AG04449 (cell line): ENCODE measurements at regions of chr16 and their contacts with region 1.

Region 1: GRCh38 chr16:10981697-10982216 is 37.4 kb downstream of the CLEC16A start:
- DNase-seq: no peak
- H3K4me3 ChIP-seq: no peak overlapping the region
- CTCF ChIP-seq: peak; percentile 19

Region 2: GRCh38 chr16:10846213-10846998 is 135.4 kb before region 1 on chr16:
- CTCF ChIA-PET with region 1: no interaction called
- POLR2A ChIA-PET with region 1: no interaction called
- DNase-seq: no peak
- H3K4me3 ChIP-seq: no peak overlapping the region
- CTCF ChIP-seq: no peak

Region 3: DNA sequence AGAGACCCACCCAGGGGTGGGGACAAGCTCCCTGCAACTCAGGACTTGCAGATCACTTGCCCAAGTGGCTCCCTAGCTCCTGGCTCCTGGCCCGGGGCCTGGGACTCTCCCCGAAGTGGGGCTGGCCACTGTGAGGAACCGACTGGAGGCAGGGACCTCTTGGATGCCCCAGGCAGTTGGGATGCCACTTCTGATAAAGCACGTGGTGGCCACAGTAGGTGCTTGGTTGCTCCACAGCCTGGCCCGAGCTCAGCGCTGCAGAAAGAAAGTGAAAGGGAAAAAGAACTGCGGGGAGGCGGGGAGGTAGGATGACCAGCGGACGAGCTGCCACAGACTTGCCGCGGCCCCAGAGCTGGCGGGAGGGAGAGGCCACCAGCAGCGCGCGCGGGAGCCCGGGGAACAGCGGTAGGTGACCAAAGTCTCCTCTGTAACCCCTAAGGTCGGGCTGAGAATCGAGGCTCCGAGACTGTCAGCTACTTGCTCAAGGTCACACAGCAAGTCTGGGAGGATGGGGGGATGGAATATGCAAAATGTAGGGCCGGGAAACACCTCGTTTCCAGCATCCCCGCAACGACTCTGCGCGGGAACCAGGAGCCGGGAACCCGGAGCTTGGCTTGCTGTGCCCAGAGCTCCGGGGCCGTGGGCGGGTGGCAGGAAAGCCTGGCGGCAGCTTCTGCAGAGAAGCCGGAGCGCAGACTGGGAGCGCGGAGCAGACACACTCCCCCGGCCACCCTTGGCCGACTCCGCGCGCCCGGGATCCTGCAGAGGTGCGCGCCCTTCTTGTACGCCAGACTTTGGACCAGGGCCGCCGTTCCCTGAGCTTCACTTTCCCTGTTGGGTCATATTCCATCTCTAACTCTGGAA is 102.9 kb before region 1 on chr16:
- CTCF ChIA-PET with region 1: no interaction called
- POLR2A ChIA-PET with region 1: no interaction called
- DNase-seq: no peak
- H3K4me3 ChIP-seq: peak overlapping the region; percentile 56
- CTCF ChIP-seq: no peak

Region 4: GRCh38 chr16:10929853-10930754 is 51.7 kb before region 1 on chr16:
- CTCF ChIA-PET with region 1: no interaction called
- POLR2A ChIA-PET with region 1: no interaction called
- DNase-seq: no peak
- H3K4me3 ChIP-seq: no peak overlapping the region
- CTCF ChIP-seq: no peak

Region 5: DNA sequence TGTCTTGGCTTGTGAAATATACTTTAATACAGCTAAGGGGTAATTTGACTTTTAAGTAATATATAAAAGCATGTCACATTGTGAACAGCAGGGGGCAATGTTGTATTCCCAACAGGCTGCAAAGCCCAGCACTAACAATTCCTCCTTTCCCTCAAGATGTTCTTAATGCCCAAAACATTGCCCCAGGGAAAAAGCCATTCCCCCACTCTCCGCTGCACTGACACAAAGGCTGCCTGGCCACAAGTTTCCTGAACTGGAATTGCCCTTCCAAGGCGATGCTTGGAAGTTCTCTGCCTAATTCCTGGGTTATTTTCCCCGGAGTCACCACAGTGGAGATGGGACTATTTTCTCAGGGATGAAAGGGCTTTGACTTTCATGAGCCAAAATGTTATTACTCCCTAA is 10.2 kb before region 1 on chr16:
- CTCF ChIA-PET with region 1: interaction called, 12 read pairs
- POLR2A ChIA-PET with region 1: no interaction called
- DNase-seq: peak; percentile 75
- H3K4me3 ChIP-seq: no peak overlapping the region
- CTCF ChIP-seq: peak; percentile 59

Region 6: GRCh38 chr16:11032922-11033291 is 51.1 kb after region 1 on chr16:
- CTCF ChIA-PET with region 1: no interaction called
- POLR2A ChIA-PET with region 1: no interaction called
- DNase-seq: no peak
- H3K4me3 ChIP-seq: no peak overlapping the region
- CTCF ChIP-seq: no peak